Natural killer cell (primary cell): ENCODE measurements at regions of chr4 and their contacts with region 1.

Region 1: DNA sequence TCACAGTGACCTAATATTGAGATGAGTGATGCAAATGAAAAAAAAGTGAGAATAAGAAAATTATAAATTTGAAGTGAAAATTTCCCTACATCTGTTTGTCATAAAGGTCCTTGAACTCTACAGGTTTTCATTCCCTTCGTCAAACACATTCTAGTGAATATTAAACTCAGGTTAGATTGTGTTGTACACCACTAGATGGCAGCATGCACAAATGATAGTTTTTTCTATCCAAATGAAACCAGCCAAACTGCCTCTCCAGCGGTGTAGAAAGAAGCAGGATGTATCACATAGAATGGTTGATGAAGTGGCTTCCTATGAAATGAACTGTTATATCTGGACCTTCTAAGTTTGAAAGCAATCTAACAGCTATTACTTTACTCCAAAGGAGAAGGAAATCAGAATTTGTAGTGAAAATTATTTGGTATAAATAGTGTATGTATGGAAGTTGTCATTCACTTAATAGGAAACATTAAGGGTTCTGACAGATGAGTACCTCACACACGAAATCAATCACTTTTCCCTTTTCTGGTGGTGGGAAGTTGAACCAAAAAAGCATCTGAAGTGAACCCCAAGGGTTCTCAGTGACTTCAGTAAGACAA is 382.7 kb downstream of the UNC5C start:
- DNase-seq: peak in 1 of 2 donors; percentile 77
- ATAC-seq: peak; percentile 70 to 72 (median 71)
- H3K4me3 ChIP-seq: no peak overlapping the region
- H3K4me3 Mint-ChIP-seq: no peak overlapping the region
- H3K27ac ChIP-seq: no peak overlapping the region
- H3K27ac Mint-ChIP-seq: no peak overlapping the region
- H3K4me1 ChIP-seq: peaks cover 16% of the 10 kb centered on the region
- H3K4me1 Mint-ChIP-seq: peaks cover 14 to 32% of the 10 kb centered on the region in 2 donors
- H3K27me3 ChIP-seq: no peaks in the 10 kb centered on the region
- H3K27me3 Mint-ChIP-seq: peaks cover 0 to 2% of the 10 kb centered on the region in 2 donors
- CTCF ChIP-seq: peak; percentile 77

Region 2: GRCh38 chr4:96352051-96352517 is 1186.1 kb after region 1 on chr4:
- intact Hi-C with region 1: loop called (anchors 2 kb)
- DNase-seq: peak in 1 of 2 donors; percentile 4
- ATAC-seq: peak in 1 of 3 donors; percentile 32
- H3K4me3 ChIP-seq: no peak overlapping the region
- H3K4me3 Mint-ChIP-seq: no peak overlapping the region
- H3K27ac ChIP-seq: no peak overlapping the region
- H3K27ac Mint-ChIP-seq: no peak overlapping the region
- H3K4me1 ChIP-seq: no peaks in the 10 kb centered on the region
- H3K4me1 Mint-ChIP-seq: peaks cover 14 to 15% of the 10 kb centered on the region in 2 donors
- H3K27me3 ChIP-seq: no peaks in the 10 kb centered on the region
- H3K27me3 Mint-ChIP-seq: no peaks in the 10 kb centered on the region
- CTCF ChIP-seq: peak; percentile 30